BJ (cell line): ENCODE measurements at regions of chr3 and their contacts with region 1.

Region 1: GRCh38 chr3:190012314-190012782 is 108.3 kb downstream of the P3H2 start:
- DNase-seq: no peak
- H3K4me3 ChIP-seq: no peak overlapping the region
- H3K27me3 ChIP-seq: no peaks in the 10 kb centered on the region
- CTCF ChIP-seq: no peak

Region 2: GRCh38 chr3:190183121-190183520 is 170.8 kb after region 1 on chr3:
- CTCF ChIA-PET with region 1: no interaction called
- POLR2A ChIA-PET with region 1: interaction called, 13 read pairs
- DNase-seq: peak; percentile 93
- H3K4me3 ChIP-seq: no peak overlapping the region
- H3K27me3 ChIP-seq: no peaks in the 10 kb centered on the region
- CTCF ChIP-seq: no peak

Region 3: GRCh38 chr3:190205739-190206138 is 193.4 kb after region 1 on chr3:
- CTCF ChIA-PET with region 1: interaction called, 11 read pairs
- POLR2A ChIA-PET with region 1: no interaction called
- DNase-seq: no peak
- H3K4me3 ChIP-seq: no peak overlapping the region
- H3K27me3 ChIP-seq: no peaks in the 10 kb centered on the region
- CTCF ChIP-seq: no peak

Region 4: DNA sequence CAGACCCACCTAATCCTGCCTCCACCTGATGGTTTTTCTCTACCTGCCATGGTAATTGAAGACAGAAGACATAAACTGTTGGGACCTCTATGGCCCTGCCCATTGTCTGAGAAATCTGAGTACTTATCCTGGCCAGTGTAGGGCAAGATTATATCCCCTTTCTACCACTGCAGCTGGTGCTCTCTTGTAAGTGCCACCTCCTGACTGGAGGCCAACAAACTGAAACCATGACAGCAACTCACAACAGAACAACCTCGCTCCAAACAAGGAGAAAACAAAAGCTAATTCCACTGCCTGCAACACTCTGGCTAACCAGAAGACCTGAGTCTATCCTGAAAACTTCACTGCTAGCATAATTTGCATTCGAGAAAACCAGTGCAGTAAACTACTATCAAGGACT is 227.0 kb after region 1 on chr3:
- CTCF ChIA-PET with region 1: no interaction called
- POLR2A ChIA-PET with region 1: no interaction called
- DNase-seq: no peak
- H3K4me3 ChIP-seq: no peak overlapping the region
- H3K27me3 ChIP-seq: no peaks in the 10 kb centered on the region
- CTCF ChIP-seq: no peak